AG04449 (cell line): ENCODE measurements at regions of chr2 and their contacts with region 1.

Region 1: GRCh38 chr2:201118121-201118960 is 2.4 kb downstream of the CFLAR start:
- DNase-seq: no peak
- H3K4me3 ChIP-seq: peak overlapping the region; percentile 61
- CTCF ChIP-seq: peak; percentile 50

Region 2: GRCh38 chr2:201144101-201145051 is 26.0 kb after region 1 on chr2:
- CTCF ChIA-PET with region 1: interaction called, 14 read pairs
- POLR2A ChIA-PET with region 1: interaction called, 4 read pairs
- DNase-seq: no peak
- H3K4me3 ChIP-seq: no peak overlapping the region
- CTCF ChIP-seq: no peak

Region 3: DNA sequence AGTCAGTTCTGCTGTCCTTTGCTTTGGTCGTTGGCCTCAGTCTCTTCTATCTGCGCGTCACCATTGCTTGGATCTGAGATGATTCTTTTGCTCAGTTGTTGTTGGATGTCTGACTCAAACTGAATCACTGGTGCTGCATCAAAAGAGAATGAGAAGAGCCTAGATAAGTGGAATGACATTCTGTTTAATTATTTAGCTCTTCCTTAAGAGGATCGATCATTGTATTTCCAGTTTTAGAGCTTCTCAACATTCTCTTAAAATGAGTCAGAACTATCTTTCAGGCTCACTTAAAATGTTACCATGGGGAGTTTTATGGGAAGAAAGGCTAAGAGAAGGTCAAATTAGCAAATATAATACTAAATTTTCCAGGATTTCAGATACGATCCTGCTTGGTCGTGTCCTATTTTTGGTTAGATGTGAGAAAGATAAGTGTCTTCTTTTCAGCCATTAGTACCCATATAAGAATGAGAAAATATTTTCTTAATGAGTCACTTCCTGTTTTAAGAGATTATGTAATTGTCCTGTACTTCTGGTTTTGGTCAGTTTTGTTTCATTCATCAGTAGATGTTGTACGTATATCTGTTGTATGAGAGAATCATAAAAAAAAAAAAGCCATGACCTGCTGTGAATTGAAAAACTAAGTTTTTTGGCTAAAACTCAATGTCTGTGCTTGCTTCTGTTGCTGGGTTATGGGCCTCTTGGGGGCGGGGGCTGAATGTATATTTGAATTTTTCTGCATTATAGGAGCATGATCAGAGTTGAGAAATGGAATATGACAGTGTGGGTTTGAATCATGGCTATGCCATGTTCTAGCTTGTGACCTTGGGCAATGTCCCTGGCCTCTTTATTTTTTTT is 33.0 kb after region 1 on chr2:
- CTCF ChIA-PET with region 1: interaction called, 16 read pairs
- POLR2A ChIA-PET with region 1: interaction called, 5 read pairs
- DNase-seq: peak; percentile 73
- H3K4me3 ChIP-seq: peak overlapping the region; percentile 3
- CTCF ChIP-seq: no peak

Region 4: DNA sequence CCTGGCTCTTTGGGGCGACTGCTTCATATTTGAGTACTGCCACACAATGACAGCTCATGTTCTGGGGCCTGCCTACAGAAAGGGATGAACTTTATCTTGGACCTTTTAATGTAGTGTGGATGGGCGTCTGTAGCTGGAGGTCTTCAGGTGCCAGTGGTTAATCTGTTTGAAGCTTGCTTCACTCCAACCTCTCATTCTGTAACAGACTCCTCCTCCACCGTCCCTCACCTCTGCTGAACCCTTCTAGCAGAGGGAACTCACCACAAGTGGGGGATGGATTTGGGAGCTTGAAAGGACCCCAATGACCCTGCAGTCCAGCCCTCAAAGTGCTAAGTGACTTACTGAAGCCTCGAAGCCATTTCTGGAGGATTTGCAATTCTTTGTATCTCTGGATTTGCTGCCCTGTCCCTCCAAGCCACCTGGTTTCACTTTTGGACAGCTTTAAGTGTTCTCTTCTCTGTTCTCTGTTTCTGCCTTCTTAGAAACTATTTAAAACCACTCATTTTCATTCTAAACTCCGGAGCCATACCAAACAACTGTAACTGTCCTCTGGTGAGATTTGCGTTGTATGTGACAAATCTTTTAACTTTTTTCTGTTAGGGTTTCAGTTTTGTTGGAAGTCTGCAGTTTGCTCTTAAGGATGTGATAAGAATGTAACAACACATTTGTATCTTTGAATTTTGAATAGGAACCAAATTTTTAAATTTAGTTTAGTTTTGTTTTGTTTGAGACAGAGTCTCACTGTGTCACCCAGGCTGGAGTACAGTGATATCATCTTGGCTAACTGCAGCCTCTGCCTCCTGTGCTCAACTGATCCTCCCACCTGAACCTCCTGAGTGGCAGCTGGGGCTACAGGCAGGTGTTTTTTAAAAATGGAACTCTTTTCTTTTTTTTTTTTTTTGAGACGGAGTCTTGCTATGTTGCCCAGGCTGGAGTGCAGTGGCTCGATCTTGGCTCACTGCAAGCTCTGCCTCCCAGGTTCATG is 105.0 kb after region 1 on chr2:
- CTCF ChIA-PET with region 1: no interaction called
- POLR2A ChIA-PET with region 1: no interaction called
- DNase-seq: no peak
- H3K4me3 ChIP-seq: no peak overlapping the region; the same call in 1 of the 2 replicates
- CTCF ChIP-seq: no peak

Region 5: GRCh38 chr2:201484805-201485204 is 366.5 kb after region 1 on chr2:
- CTCF ChIA-PET with region 1: no interaction called
- POLR2A ChIA-PET with region 1: no interaction called
- DNase-seq: no peak
- H3K4me3 ChIP-seq: no peak overlapping the region
- CTCF ChIP-seq: no peak